HAP-1 (cell line): ENCODE measurements at regions of chr9 and their contacts with region 1.

Region 1: DNA sequence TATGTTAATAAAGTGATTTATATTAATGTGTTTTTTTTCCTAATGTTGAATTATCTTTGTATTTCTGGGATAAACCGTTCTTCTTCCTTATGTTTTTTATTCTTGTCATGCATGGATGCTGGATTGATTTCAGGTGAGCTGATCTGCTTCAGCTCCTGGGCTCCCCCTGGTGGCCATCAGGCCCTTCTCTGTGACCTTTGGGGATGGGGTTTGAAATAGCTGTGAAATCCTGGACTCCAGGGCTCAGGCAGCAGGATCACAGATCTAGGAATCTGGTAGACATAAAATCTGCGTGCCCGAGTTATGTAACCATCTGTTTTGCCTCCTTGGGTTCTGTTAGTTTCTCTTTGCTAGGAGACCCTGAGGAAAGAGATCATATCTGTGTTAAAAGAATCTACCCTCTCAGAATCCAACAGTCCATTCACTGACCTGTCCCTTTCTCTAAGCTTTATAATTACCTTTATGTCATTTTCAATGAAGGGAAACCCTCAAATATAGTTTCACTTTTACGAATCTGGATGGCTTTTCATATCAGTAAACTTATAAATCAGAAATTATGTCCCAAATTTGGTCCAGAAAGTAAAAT is 12.2 kb upstream of the OR13J1 start:
- DNase-seq: peak; percentile 65 to 91
- H3K4me3 ChIP-seq: no peak overlapping the region
- H3K4me1 ChIP-seq: peaks cover 7% of the 10 kb centered on the region
- H3K27me3 ChIP-seq: peaks cover 7% of the 10 kb centered on the region

Region 2: DNA sequence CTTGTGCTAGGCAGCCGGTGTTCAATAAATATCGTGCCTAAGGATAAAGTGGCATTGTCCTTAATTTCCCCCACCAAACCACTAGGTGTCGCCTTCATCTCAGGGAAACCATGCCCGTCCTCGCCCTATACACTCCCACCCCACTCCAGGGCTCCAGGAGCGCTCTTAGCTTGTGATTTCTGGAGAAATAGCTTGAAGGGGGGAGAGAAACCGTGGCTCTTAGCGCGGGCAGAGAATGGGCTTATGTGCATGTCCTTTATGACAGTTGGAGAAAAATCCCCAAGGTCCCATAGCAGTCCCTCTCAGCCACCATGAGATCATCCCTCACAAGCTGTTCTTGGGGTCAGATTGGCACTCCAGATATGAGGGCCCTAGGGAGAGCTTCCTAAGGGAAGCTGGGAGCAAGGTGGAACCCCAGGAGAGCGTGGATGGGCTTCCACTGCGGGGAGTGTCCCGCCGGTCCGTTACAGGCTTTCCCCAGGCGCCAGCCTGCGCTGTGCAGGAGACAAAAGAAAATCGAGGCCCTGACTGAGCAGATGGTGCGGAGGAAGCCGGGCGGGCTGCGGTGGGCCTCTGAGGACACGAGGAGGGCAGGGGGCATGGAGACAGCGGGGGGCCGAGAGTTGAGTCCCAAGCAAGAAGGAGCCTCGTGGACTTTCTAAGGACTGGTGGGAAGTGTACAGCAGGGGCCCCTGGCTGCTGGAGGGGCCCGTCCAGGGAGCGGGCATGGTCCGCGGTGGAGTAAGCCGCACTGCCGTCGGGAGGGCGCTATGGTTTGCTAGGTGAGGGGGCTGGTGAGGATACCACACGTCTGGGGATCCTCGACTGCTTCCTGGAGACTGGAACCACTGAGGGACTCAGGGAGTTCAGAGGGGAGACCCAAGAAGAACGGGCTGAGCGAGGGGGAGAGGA is 91.7 kb before region 1 on chr9:
- in situ Hi-C with region 1: loop called (anchors 5 kb)
- DNase-seq: peak; percentile 76 to 84
- H3K4me3 ChIP-seq: no peak overlapping the region
- H3K4me1 ChIP-seq: peaks cover 26% of the 10 kb centered on the region
- H3K27me3 ChIP-seq: no peaks in the 10 kb centered on the region

Region 3: DNA sequence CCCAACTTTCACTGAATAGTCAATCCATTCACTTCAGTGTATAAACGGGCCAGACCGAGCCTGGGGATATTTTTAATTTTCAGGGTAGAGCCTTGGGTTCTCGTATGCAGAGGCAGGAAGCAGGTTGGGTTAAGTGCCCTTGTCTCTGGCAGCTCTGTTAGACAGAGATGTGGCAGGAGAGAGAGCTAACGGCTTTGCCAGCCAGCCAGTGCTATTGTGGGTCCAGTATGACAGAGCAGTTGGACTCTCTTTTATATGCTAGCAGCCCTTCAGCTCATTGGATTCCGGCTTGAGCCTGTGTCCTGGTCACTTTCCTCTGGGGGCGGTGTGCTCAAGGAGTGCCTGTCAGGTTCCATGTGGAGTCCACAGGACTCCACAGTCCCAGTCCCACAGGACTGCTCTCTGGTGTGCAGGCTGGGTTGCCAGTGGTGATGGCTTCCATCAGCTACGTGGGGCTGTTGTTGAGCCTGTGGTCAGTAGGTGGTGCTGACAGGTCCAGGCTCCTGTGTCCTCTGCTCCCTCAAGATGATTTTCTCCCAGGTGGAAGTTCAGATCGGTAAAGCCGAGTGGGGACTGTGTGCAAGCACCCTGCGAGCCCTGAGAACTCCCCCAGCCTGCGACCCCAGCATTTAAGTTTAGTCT is 322.7 kb after region 1 on chr9:
- in situ Hi-C with region 1: no loop called
- DNase-seq: no peak
- H3K4me3 ChIP-seq: no peak overlapping the region
- H3K4me1 ChIP-seq: no peaks in the 10 kb centered on the region; the same call in 1 of the 2 replicates
- H3K27me3 ChIP-seq: no peaks in the 10 kb centered on the region